ENCODE measurements at regions of chr10 and their contacts with region 1.

Region 1: DNA sequence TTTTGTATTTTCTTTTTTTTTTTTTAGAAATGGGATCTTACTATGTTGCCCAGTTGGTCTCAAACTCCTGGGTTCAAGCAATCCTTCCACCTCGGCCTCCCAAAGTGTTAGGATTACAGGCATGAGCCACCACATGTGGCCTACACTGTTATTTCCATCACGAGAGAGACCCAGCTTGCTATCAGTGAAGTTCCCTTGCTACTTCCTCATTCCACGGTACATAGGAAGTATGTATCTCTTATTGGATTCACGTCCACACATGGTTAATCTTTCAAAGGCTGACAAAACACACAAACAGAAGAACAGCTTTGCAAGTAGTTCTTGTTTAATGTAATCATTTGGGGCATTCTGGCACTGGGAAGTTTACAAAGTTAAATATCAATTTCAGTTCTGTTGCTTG is 50.9 kb downstream of the DCLRE1A start:
- DNase-seq: no peak
- CTCF ChIP-seq: no peak

Region 2: GRCh38 chr10:113663142-113663541 is 139.9 kb before region 1 on chr10:
- CTCF ChIA-PET with region 1: no interaction called
- POLR2A ChIA-PET with region 1: no interaction called
- DNase-seq: no peak
- CTCF ChIP-seq: no peak

Region 3: GRCh38 chr10:113770346-113770745 is 32.7 kb before region 1 on chr10:
- CTCF ChIA-PET with region 1: interaction called, 11 read pairs
- POLR2A ChIA-PET with region 1: no interaction called
- DNase-seq: no peak
- CTCF ChIP-seq: no peak

Region 4: DNA sequence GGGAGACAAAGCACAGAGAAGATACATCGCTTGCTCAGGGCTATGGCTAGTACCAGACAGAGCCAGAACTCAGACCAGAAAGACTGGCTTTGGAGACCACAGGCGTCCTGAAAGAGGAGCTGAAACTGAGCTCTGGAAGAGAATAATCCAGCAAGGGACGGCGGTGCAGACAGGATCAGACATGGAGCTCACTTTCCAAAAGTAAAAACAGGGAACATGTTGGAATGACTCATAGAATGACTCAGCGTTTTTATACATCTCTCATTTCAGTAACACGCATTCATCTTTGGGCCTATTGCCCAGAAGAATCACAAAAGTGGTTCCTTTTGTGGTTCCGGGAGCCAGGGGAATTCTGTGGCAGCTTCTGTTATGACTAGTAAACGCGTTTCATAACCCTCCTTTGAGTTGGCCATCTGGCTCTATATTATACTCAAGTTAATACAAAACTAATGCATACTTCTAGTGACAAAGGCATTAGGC is 14.4 kb before region 1 on chr10:
- CTCF ChIA-PET with region 1: interaction called, 24 read pairs
- POLR2A ChIA-PET with region 1: no interaction called
- DNase-seq: peak; percentile 30
- CTCF ChIP-seq: no peak

Region 5: GRCh38 chr10:114103284-114103683 is 300.3 kb after region 1 on chr10:
- CTCF ChIA-PET with region 1: interaction called, 79 read pairs
- POLR2A ChIA-PET with region 1: no interaction called
- DNase-seq: peak; percentile 70
- CTCF ChIP-seq: peak; percentile 59

Region 6: GRCh38 chr10:114110174-114110972 is 307.4 kb after region 1 on chr10:
- CTCF ChIA-PET with region 1: interaction called, 79 read pairs
- POLR2A ChIA-PET with region 1: no interaction called
- DNase-seq: no peak
- CTCF ChIP-seq: no peak